ENCODE measurements at regions of chr19 and their contacts with region 1.

Region 1: GRCh38 chr19:1592755-1593500 is at the start of gene MBD3:
- DNase-seq: peak; percentile 72 to 95 (median 84)
- ATAC-seq: peak; percentile 89
- H3K4me3 ChIP-seq: peak within 1 kb of the TSS; percentile 80 to 95
- H3K4me3 Mint-ChIP-seq: peak within 1 kb of the TSS; percentile 88
- H3K27ac ChIP-seq: peak within 1 kb of the TSS; percentile 84 to 88
- H3K27ac Mint-ChIP-seq: peak within 1 kb of the TSS; percentile 91
- H3K4me1 ChIP-seq: peaks cover 18% of the 10 kb centered on the region
- H3K4me1 Mint-ChIP-seq: peaks cover 22% of the 10 kb centered on the region
- H3K27me3 ChIP-seq: no peaks in the 10 kb centered on the region
- H3K27me3 Mint-ChIP-seq: no peaks in the 10 kb centered on the region
- CTCF ChIP-seq: no peak
- total RNA-seq, gene MBD3: 31.0 to 37.2 TPM

Region 2: GRCh38 chr19:1568320-1569019 is 24.5 kb before region 1 on chr19 and contains the start of gene MEX3D:
- CTCF ChIA-PET with region 1: no interaction called
- POLR2A ChIA-PET with region 1: no interaction called
- intact Hi-C with region 1: loop called (anchors 1 to 2 kb)
- DNase-seq: peak; percentile 54 to 91 (median 83)
- ATAC-seq: peak; percentile 95
- H3K4me3 ChIP-seq: peak within 1 kb of the TSS; percentile 16 to 39
- H3K4me3 Mint-ChIP-seq: peak within 1 kb of the TSS; percentile 57
- H3K27ac ChIP-seq: no peak within 1 kb of the TSS
- H3K27ac Mint-ChIP-seq: no peak within 1 kb of the TSS
- H3K4me1 ChIP-seq: peaks cover 8% of the 10 kb centered on the region
- H3K4me1 Mint-ChIP-seq: peaks cover 4% of the 10 kb centered on the region
- H3K27me3 ChIP-seq: peaks cover 0 to 2% of the 10 kb centered on the region in 2 experiments
- H3K27me3 Mint-ChIP-seq: no peaks in the 10 kb centered on the region
- CTCF ChIP-seq: no peak
- total RNA-seq, gene MEX3D: 1.5 to 1.7 TPM

Region 3: GRCh38 chr19:1605236-1606137 is 12.6 kb after region 1 on chr19 and contains the start of gene UQCR11:
- CTCF ChIA-PET with region 1: interaction called, 5 read pairs
- POLR2A ChIA-PET with region 1: interaction called, 12 read pairs
- intact Hi-C with region 1: loop called (anchors 1 kb)
- DNase-seq: peak; percentile 76 to 96 (median 93)
- ATAC-seq: peak; percentile 83
- H3K4me3 ChIP-seq: peak within 1 kb of the TSS; percentile 76 to 100
- H3K4me3 Mint-ChIP-seq: peak within 1 kb of the TSS; percentile 99
- H3K27ac ChIP-seq: peak within 1 kb of the TSS; percentile 72 to 82
- H3K27ac Mint-ChIP-seq: peak within 1 kb of the TSS; percentile 99
- H3K4me1 ChIP-seq: peaks cover 51% of the 10 kb centered on the region
- H3K4me1 Mint-ChIP-seq: peaks cover 55% of the 10 kb centered on the region
- H3K27me3 ChIP-seq: no peaks in the 10 kb centered on the region
- H3K27me3 Mint-ChIP-seq: no peaks in the 10 kb centered on the region
- CTCF ChIP-seq: peak; percentile 90
- total RNA-seq, gene UQCR11: 97.1 to 98.0 TPM

Measured in CD8-positive, alpha-beta T cell (primary cell).